ENCODE measurements at regions of chr21 and their contacts with region 1.

Region 1: GRCh38 chr21:16454399-16454798 is 724.6 kb downstream of the USP25 start:
- DNase-seq: no peak
- H3K4me3 ChIP-seq: no peak overlapping the region
- H3K27ac ChIP-seq: no peak overlapping the region
- H3K4me1 ChIP-seq: no peaks in the 10 kb centered on the region
- H3K27me3 ChIP-seq: no peaks in the 10 kb centered on the region
- CTCF ChIP-seq: no peak

Region 2: GRCh38 chr21:15928196-15928595 is 526.2 kb before region 1 on chr21:
- CTCF ChIA-PET with region 1: no interaction called
- POLR2A ChIA-PET with region 1: no interaction called
- intact Hi-C with region 1: no loop called
- DNase-seq: no peak
- H3K4me3 ChIP-seq: no peak overlapping the region
- H3K27ac ChIP-seq: no peak overlapping the region
- H3K4me1 ChIP-seq: no peaks in the 10 kb centered on the region
- H3K27me3 ChIP-seq: no peaks in the 10 kb centered on the region
- CTCF ChIP-seq: no peak

Region 3: GRCh38 chr21:16534408-16535101 is 80.2 kb after region 1 on chr21:
- CTCF ChIA-PET with region 1: no interaction called
- POLR2A ChIA-PET with region 1: no interaction called
- intact Hi-C with region 1: no loop called
- DNase-seq: peak; percentile 9
- H3K4me3 ChIP-seq: peak overlapping the region; percentile 53
- H3K27ac ChIP-seq: no peak overlapping the region
- H3K4me1 ChIP-seq: peaks cover 6% of the 10 kb centered on the region
- H3K27me3 ChIP-seq: no peaks in the 10 kb centered on the region
- CTCF ChIP-seq: no peak

Region 4: DNA sequence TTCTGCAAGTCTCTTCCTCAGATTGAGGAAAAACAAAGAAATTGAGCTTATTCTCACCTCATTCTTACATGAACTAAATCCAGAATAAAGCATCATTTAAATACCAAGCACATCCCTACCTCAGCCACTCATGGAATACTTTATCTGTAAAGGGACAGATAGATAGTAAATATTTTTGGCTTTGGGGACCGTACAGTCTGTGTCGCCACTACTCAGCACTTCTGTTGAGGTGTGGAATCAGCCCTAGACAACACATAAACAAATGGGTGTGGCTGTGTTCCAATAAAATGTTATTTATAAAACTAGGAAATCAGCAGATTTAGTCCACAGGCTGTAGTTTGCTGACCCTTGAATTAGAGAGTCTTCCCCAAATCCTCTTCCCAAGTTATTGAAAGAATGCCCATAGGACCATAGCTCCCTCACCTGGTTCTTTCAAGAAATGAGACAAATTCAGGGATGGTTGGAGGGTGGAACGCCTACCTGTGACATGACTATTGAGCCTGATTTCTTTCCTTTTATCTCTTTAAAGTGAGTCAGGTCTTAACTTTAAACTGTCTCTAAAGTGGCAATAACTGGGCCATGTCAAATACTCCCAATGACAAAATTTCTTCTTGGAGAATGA is 153.9 kb after region 1 on chr21:
- CTCF ChIA-PET with region 1: no interaction called
- POLR2A ChIA-PET with region 1: no interaction called
- intact Hi-C with region 1: loop called (anchors 10 kb)
- DNase-seq: no peak
- H3K4me3 ChIP-seq: no peak overlapping the region
- H3K27ac ChIP-seq: no peak overlapping the region
- H3K4me1 ChIP-seq: no peaks in the 10 kb centered on the region
- H3K27me3 ChIP-seq: no peaks in the 10 kb centered on the region
- CTCF ChIP-seq: 0 out of 2 replicates have a peak, but pooled peaks have one; percentile 19

Region 5: DNA sequence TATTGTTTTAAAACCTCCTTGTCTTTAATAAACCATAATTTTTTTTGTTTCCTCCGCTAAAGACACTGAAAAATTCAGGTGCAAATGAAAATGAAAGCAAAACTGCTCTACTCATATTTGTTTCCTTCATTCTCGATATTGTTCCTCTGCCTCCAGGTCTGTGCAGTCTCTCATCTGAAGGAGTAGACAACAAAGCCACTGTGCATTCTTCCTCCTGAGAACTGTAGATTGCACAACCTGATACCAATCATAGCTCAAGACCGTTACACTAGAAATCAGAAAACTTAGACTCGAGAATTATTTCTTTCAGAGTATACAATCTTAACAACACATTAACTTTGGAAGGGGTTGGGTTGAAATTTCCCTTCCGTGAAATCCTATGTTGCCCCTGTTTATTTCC is 685.3 kb after region 1 on chr21:
- CTCF ChIA-PET with region 1: no interaction called
- POLR2A ChIA-PET with region 1: no interaction called
- intact Hi-C with region 1: no loop called
- DNase-seq: no peak
- H3K4me3 ChIP-seq: no peak overlapping the region
- H3K27ac ChIP-seq: no peak overlapping the region
- H3K4me1 ChIP-seq: no peaks in the 10 kb centered on the region
- H3K27me3 ChIP-seq: no peaks in the 10 kb centered on the region
- CTCF ChIP-seq: no peak